ENCODE measurements at regions of chr1 and their contacts with region 1.

Region 1: GRCh38 chr1:40986956-40987355 is 7.5 kb downstream of the CTPS1 start:
- DNase-seq: no peak
- ATAC-seq: no peak
- H3K4me3 Mint-ChIP-seq: no peak overlapping the region
- H3K27ac Mint-ChIP-seq: no peak overlapping the region
- H3K4me1 Mint-ChIP-seq: peaks cover 44% of the 10 kb centered on the region
- H3K27me3 Mint-ChIP-seq: no peaks in the 10 kb centered on the region
- CTCF ChIP-seq: no peak

Region 2: DNA sequence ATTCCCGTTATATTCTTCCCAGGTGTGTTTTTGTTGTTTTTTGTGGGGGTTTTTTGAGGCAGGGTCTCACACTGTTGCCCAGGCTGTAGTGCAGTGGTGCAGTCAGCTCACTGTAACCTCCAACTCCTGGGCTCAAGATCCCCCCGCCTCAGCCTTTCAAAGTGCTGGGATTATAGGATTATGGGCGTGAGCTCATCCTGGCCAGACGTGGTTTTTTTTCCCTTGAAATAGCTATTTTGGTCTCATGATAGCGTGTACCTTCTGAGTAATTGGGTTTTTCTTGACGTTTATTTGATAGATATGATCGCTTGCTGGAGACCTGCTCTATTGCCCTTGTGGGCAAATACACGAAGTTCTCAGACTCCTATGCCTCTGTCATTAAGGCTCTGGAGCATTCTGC is 10.1 kb after region 1 on chr1:
- CTCF ChIA-PET with region 1: interaction called, 8 read pairs
- POLR2A ChIA-PET with region 1: interaction called, 67 read pairs
- intact Hi-C with region 1: no loop called
- DNase-seq: no peak
- ATAC-seq: no peak
- H3K4me3 Mint-ChIP-seq: no peak overlapping the region
- H3K27ac Mint-ChIP-seq: no peak overlapping the region
- H3K4me1 Mint-ChIP-seq: peaks cover 8% of the 10 kb centered on the region
- H3K27me3 Mint-ChIP-seq: no peaks in the 10 kb centered on the region
- CTCF ChIP-seq: no peak

Region 3: GRCh38 chr1:41003640-41004220 is 16.8 kb after region 1 on chr1:
- CTCF ChIA-PET with region 1: interaction called, 8 read pairs
- POLR2A ChIA-PET with region 1: interaction called, 67 read pairs
- intact Hi-C with region 1: no loop called
- DNase-seq: peak; percentile 98
- ATAC-seq: peak; percentile 96
- H3K4me3 Mint-ChIP-seq: no peak overlapping the region
- H3K27ac Mint-ChIP-seq: peak overlapping the region; percentile 37
- H3K4me1 Mint-ChIP-seq: peaks cover 27% of the 10 kb centered on the region
- H3K27me3 Mint-ChIP-seq: no peaks in the 10 kb centered on the region
- CTCF ChIP-seq: peak; percentile 46